Left cardiac atrium (tissue), 4 donors: ENCODE measurements at regions of chr3 and their contacts with region 1.

Region 1: DNA sequence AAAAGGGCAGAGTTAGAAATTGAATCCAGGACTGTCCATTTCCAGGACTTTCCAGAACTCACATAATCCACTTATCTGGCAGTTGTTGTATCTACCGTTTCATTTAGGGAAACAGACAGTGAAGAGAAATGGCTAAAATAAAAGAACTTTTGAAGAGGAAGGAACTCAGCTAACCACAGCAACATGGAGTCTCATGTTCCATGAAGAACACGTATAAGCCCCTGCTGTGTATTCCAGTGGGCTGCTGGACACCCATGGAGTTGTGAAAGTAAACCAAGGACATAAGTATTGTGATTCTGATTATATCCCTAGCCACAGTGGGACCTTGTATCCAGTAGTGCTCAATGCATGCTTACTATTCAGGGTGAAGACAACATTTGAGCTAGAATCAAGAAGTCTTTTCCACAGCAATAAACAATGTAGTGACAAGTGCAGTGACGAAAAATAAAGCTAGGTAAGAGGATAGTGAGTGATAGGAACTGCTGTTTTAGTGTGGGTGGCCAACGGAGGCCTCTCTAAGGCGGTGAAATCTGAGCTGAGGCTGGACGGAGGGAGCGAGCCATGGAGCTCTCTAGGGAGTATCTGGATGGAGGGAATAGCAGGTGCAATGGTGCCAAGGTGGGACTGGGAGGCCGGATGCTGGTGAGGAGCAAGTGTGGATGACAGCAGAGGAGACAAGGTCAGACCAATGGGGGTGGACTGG is 26.8 kb upstream of the TRH start:
- DNase-seq: no peak
- ATAC-seq: peak in 1 of 2 donors; percentile 27

Region 2: DNA sequence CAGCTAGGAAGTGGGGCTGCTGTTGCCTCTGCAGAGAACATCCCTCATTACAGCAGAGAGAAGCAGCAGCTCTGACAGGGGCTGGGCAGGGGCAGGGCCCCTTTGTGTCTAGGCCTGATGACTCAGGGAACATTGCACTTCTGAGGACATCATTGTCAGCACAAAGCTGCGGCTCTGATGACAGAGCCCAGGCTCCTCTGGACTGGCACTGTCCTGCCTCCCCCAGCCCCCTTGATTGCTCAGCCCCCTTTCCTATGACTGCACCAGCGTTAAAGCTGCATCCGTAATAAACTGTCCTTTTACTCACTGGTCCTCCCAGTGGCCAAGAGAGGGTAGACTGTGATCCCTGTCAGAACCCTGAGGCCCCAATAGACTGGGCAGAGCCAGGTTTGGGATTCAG is 45.1 kb after region 1 on chr3:
- intact Hi-C with region 1: loop called (anchors 5 kb)
- DNase-seq: no peak
- ATAC-seq: peak in 1 of 2 donors; percentile 54